Activated CD4-positive, alpha-beta T cell treated with anti-CD3 and anti-CD28 coated beads, Interleukin-2, amount 10 ng/mL, durations not matched to agents 24 days and 14 days (primary cell): ENCODE measurements at regions of chr6 and their contacts with region 1.

Region 1: DNA sequence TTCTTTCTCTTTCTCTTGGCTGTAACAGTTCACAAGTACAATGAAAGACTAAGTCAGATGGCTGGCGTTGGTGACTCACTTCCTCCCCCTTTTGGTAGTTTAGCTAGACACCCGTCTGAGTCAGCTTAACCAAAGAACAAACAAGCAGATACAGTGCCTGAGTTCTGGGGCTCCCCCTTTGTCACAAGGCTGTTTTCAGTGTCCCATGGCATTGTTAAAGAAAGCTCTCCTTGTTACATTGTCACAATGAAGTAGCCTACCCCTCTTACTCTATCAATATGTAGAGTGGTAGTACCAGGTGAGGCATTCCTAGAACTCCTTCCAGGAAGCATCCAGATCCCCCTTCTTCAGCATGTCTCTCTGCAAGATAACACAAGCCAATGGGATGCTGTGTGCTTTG is 38.6 kb downstream of the KIAA0408 start:
- DNase-seq: peak; percentile 92
- H3K4me3 Mint-ChIP-seq: peak overlapping the region; percentile 51
- H3K27ac Mint-ChIP-seq: peak overlapping the region; percentile 86
- H3K4me1 Mint-ChIP-seq: peaks cover 12% of the 10 kb centered on the region
- H3K27me3 Mint-ChIP-seq: no peaks in the 10 kb centered on the region

Region 2: GRCh38 chr6:127291495-127291894 is 129.1 kb before region 1 on chr6:
- intact Hi-C with region 1: loop called (anchors 1 kb)
- DNase-seq: no peak
- H3K4me3 Mint-ChIP-seq: peak overlapping the region; percentile 20
- H3K27ac Mint-ChIP-seq: peak overlapping the region; percentile 76
- H3K4me1 Mint-ChIP-seq: peaks cover 26% of the 10 kb centered on the region
- H3K27me3 Mint-ChIP-seq: no peaks in the 10 kb centered on the region

Region 3: GRCh38 chr6:127342946-127343808 is 77.4 kb before region 1 on chr6 and contains the start of gene ECHDC1:
- intact Hi-C with region 1: loop called (anchors 1 kb)
- DNase-seq: peak; percentile 91
- H3K4me3 Mint-ChIP-seq: no peak within 1 kb of the TSS
- H3K27ac Mint-ChIP-seq: no peak within 1 kb of the TSS
- H3K4me1 Mint-ChIP-seq: peaks cover 18% of the 10 kb centered on the region
- H3K27me3 Mint-ChIP-seq: no peaks in the 10 kb centered on the region
- total RNA-seq, gene ECHDC1: 60.2 and 63.1 TPM in 2 replicates

Region 4: DNA sequence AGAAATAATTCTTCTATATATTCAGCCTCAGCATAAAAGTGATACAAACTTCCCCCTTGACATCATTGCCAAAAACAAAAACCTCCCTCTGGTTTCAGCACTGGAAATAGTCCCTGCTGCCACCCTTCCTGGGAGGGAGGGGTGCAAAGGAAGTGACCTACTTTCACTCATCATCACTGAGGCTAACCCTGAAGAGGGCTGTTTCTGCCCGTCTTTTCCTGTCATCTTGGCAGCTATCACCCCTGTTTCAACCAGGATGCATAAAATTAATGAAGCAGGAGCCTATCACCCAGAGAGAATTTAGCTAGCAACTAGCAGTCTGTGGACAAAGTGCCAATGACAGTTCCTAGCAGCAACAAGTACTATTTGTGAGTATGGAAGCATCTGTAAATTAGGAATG is 1860.2 kb after region 1 on chr6:
- intact Hi-C with region 1: no loop called
- DNase-seq: peak; percentile 79
- H3K4me3 Mint-ChIP-seq: peak overlapping the region; percentile 22
- H3K27ac Mint-ChIP-seq: no peak overlapping the region
- H3K4me1 Mint-ChIP-seq: peaks cover 11% of the 10 kb centered on the region
- H3K27me3 Mint-ChIP-seq: peaks cover 3% of the 10 kb centered on the region